Lower leg skin (tissue), 4 donors: ENCODE measurements at regions of chr5 and their contacts with region 1.

Region 1: GRCh38 chr5:160011471-160011870 is 2.5 kb downstream of the TTC1 start:
- DNase-seq: no peak
- H3K4me3 ChIP-seq: no peak overlapping the region
- CTCF ChIP-seq: no peak
- POLR2A ChIP-seq: no peak

Region 2: GRCh38 chr5:159905496-159905895 is 106.0 kb before region 1 on chr5:
- intact Hi-C with region 1: no loop called
- DNase-seq: no peak
- H3K4me3 ChIP-seq: no peak overlapping the region
- CTCF ChIP-seq: no peak
- POLR2A ChIP-seq: no peak

Region 3: GRCh38 chr5:160199410-160199911 is 188.0 kb after region 1 on chr5:
- intact Hi-C with region 1: loop called (anchors 10 kb)
- DNase-seq: peak; percentile 45 to 93
- H3K4me3 ChIP-seq: no peak overlapping the region
- CTCF ChIP-seq: peak in 1 of 3 donors; percentile 64
- POLR2A ChIP-seq: no peak

Region 4: DNA sequence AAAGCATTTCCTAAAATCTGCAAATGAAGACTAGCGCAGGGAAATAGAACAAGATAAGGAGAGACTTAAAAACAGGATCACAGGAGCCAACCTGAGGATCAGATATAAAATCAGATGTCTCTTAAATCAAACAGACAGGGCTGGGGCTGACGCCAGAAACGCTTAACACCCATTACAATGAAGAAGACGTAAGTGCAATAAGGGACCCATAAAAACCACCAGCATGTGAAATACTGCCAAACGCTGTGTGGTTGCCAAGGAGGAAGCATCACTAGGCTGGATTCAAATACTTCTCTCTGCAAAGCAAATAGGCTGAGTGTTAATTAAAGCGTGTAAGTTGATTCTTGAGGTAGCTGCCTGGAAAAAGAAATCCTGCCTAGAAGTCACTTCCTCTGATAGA is 915.0 kb after region 1 on chr5:
- intact Hi-C with region 1: no loop called
- DNase-seq: peak in 1 of 2 donors; percentile 50
- H3K4me3 ChIP-seq: no peak overlapping the region
- CTCF ChIP-seq: no peak
- POLR2A ChIP-seq: no peak